ENCODE measurements at regions of chr17 and their contacts with region 1.

Region 1: DNA sequence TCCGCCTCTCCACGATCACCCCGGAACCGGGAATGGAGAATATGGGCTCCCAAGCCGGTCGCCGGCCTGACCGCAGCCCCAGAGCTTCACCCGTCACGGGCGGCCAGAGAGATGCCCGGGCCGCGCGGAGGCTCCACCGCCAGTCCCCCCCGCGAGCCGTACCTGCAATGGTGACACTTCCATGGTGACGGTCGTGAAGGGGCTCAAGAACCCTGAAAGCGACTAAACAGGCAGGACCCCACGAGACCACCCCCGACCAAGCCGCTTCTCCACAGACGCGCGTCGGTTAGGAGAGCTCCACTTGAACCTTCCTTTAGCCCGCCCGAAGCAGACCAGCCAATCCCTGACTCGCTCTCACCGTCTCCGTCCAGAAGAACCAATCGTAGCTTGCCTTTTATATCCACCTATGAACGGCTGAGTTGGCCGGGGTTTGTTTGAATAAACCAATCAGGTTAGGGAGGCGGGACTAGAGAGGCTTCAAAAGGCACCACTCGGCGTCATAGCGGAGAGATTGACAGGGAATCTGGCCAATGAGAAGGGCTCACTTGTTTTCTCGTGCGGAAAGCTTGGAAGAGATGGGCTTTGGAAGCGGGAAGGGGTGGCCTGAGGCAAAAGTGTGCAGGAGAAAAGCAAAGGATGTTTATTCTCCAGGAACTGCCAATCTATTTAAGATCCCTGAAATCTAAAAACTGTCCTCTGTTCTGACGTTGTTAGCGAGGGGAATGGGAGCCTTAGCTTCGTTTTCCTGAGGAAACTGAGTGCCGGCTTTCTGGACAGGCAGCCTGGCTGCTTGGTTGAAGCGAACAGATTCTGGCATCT is at the start of gene TOP2A:
- H3K4me3 ChIP-seq: peak within 1 kb of the TSS; percentile 96
- H3K27ac ChIP-seq: peak within 1 kb of the TSS; percentile 94
- H3K4me1 ChIP-seq: peaks cover 3% of the 10 kb centered on the region
- CTCF ChIP-seq: 0 out of 2 replicates have a peak, but pooled peaks have one; percentile 5

Region 2: DNA sequence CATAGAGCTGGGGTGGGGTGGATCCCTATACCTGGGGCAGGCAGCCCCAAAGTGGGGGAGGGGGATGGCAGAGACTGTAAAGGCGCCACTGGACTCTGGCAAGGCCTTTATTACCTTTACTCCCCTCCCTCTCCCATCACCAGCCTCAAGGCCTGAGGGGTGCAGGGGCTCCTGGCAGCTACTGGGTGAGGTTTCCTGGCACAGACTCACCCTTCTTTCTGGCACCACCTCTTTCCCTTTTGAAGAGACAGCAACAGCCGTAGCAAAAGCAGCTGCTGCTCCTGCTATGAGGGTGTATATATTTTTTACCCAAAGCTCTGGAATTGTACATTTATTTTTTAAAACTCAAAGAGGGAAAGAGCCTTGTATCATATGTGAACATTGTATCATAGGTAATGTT is 223.0 kb before region 1 on chr17:
- CTCF ChIA-PET with region 1: no interaction called
- POLR2A ChIA-PET with region 1: no interaction called
- H3K4me3 ChIP-seq: no peak overlapping the region
- H3K27ac ChIP-seq: peak overlapping the region; percentile 73; the same call in 1 of the 2 replicates
- H3K4me1 ChIP-seq: peaks cover 6% of the 10 kb centered on the region
- CTCF ChIP-seq: no peak

Region 3: GRCh38 chr17:40351635-40352463 is 66.0 kb before region 1 on chr17:
- CTCF ChIA-PET with region 1: no interaction called
- POLR2A ChIA-PET with region 1: no interaction called
- H3K4me3 ChIP-seq: no peak overlapping the region
- H3K27ac ChIP-seq: no peak overlapping the region
- H3K4me1 ChIP-seq: no peaks in the 10 kb centered on the region
- CTCF ChIP-seq: no peak

Region 4: DNA sequence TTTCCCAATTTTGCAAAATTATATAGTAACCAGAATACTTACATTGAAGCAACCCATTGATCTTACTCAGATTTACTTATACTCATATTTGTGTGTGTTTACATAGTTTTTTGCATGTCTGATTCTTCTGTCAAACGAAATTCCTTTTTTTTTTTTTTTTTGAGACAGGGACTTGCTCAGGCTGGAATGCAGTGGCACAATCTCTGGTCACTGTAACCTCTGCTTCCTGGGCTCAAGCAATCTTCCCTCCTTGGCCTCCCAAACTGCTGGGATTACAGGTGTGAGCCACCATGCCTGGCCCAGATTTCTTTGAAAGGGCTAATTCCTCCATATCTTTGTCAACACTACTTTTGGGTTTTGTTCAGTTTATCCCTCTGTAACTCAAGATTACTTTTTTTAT is 30.1 kb before region 1 on chr17:
- CTCF ChIA-PET with region 1: interaction called, 8 read pairs
- POLR2A ChIA-PET with region 1: interaction called, 13 read pairs
- H3K4me3 ChIP-seq: no peak overlapping the region
- H3K27ac ChIP-seq: no peak overlapping the region
- H3K4me1 ChIP-seq: no peaks in the 10 kb centered on the region
- CTCF ChIP-seq: no peak

Region 5: DNA sequence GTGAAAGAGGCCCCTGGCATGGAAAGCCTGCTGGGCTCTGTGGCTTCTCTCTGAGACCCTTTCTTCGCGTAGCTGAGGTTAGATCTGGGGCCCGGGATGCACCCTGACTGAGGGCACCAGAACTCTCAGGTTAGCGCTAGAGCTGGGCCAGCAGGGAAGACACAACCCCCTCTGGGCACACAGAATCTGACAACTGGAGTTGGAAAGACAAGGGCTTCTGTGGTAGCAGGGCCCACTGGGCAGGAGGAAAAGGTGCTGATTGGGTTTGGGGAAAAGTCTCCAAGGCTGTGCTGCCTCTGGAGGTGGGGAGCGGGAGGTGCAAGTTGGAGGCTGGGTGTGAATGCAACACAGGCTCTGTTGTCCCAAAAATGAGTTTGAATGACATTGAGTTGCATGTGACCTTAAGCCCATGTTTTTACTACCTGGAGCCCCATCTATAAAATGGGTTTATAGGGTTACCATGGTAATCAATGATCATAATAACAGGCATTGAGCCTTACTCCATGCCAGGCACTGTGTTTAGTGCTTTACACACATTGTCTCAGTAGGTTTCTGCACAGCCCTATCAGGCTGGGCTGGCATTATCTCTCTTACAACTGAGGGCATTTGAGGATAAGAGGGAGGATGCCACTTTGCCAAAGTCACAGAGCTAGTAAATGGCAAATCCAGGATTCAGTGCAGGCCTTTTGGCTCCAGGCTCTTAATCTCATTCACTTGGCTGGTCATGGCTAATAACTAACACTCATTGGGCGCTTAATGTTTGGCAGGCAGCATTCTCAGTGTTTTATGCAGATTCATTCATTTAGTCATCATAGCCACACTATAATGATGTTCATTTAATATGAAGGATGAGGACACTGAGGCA is 16.0 kb after region 1 on chr17:
- CTCF ChIA-PET with region 1: interaction called, 10 read pairs
- POLR2A ChIA-PET with region 1: interaction called, 8 read pairs
- H3K4me3 ChIP-seq: no peak overlapping the region
- H3K27ac ChIP-seq: no peak overlapping the region
- H3K4me1 ChIP-seq: no peaks in the 10 kb centered on the region
- CTCF ChIP-seq: peak; percentile 43; the same call in 1 of the 2 replicates

Region 6: DNA sequence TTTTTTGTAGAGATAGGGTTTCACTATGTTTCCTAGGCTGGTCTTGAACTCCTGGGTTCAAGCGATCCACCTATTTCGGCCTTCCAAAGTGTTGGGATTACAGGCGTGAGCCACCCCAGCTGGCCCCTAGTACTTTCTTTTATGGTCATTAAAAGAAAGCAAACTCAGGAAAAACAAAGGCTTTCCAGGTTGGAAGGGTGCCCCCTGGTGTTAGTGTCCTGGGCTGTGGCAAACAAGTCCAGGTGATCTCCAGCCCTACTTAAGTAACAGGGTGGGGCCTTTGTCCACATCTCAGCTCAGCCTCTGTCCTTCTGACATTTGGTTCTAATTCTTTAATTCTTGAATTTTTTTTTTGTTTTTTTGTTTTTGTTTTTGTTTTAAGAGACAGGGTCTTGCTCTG is 32.4 kb after region 1 on chr17:
- CTCF ChIA-PET with region 1: interaction called, 17 read pairs
- POLR2A ChIA-PET with region 1: interaction called, 10 read pairs
- H3K4me3 ChIP-seq: no peak overlapping the region
- H3K27ac ChIP-seq: no peak overlapping the region
- H3K4me1 ChIP-seq: no peaks in the 10 kb centered on the region
- CTCF ChIP-seq: peak; percentile 60

Region 7: DNA sequence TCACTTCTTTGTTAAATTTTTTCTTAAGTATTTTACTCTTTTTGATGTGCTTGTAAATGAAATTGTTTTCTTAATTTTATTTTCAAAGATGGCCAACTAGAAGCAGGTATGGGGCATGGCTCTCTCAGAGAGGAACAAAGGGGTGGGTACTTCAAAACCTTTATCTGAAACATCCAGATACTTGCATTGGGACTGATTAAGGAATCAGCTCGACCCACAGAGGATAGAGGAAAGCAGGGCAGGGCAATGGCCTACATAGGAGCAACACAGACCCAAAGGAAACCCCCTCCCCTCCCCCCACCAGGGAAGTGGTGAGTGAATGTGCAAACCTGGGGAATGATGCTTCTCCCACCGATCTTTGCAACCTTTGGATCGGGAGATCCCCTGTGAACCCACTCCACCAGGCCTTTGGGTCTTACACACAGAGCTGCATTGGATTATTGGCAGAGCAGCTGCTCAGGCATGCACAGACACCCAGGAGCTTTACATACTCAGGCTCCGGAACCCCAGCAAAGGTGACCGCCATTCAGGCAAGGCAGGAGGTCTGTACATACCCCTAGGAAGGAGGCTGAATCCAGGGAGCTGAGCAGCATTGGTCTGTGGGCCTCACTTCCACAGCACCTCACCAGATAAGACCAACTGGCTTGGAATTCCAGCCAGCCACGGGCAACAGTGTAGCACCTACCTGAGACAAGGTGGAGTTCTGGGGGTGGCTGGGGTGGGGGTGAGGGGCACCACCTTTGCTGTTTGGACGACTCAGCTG is 150.4 kb after region 1 on chr17:
- CTCF ChIA-PET with region 1: no interaction called
- POLR2A ChIA-PET with region 1: no interaction called
- H3K4me3 ChIP-seq: no peak overlapping the region
- H3K27ac ChIP-seq: no peak overlapping the region
- H3K4me1 ChIP-seq: no peaks in the 10 kb centered on the region
- CTCF ChIP-seq: no peak